ENCODE measurements at regions of chr16 and their contacts with region 1.

Region 1: GRCh38 chr16:88941913-88942909 is 34.8 kb downstream of the CBFA2T3 start:
- DNase-seq: peak in 2 of 3 donors; percentile 32 to 64
- H3K4me3 ChIP-seq: peak overlapping the region in 2 of 3 experiments; percentile 7 to 64
- H3K4me3 Mint-ChIP-seq: peak overlapping the region; percentile 70 to 73
- H3K27ac ChIP-seq: no peak overlapping the region
- H3K27ac Mint-ChIP-seq: no peak overlapping the region
- H3K4me1 ChIP-seq: peaks cover 37 to 47% of the 10 kb centered on the region in 2 donors
- H3K4me1 Mint-ChIP-seq: peaks cover 54% of the 10 kb centered on the region
- H3K27me3 ChIP-seq: peaks cover 0 to 2% of the 10 kb centered on the region in 2 donors
- H3K27me3 Mint-ChIP-seq: peaks cover 2 to 33% (median 10%) of the 10 kb centered on the region in 3 donors
- CTCF ChIP-seq: peak; percentile 97

Region 2: GRCh38 chr16:88785106-88785924 is 156.9 kb before region 1 on chr16 and contains the start of gene PIEZO1:
- intact Hi-C with region 1: loop called in 1 of 2 experiments (anchors 5 kb)
- DNase-seq: peak; percentile 62 to 75 (median 71)
- H3K4me3 ChIP-seq: peak within 1 kb of the TSS; percentile 47 to 80 (median 73)
- H3K4me3 Mint-ChIP-seq: peak within 1 kb of the TSS; percentile 90 to 93
- H3K27ac ChIP-seq: peak within 1 kb of the TSS; percentile 86 to 99
- H3K27ac Mint-ChIP-seq: peak within 1 kb of the TSS in 6 of 7 donors; percentile 87 to 95 (median 90)
- H3K4me1 ChIP-seq: peaks cover 56 to 64% of the 10 kb centered on the region in 2 donors
- H3K4me1 Mint-ChIP-seq: peaks cover 48% of the 10 kb centered on the region
- H3K27me3 ChIP-seq: no peaks in the 10 kb centered on the region
- H3K27me3 Mint-ChIP-seq: peaks cover 0 to 3% (median 0%) of the 10 kb centered on the region in 3 donors
- CTCF ChIP-seq: peak; percentile 97
- polyA plus RNA-seq, gene PIEZO1: 10.2 to 405 (median 15.0) TPM

Region 3: DNA sequence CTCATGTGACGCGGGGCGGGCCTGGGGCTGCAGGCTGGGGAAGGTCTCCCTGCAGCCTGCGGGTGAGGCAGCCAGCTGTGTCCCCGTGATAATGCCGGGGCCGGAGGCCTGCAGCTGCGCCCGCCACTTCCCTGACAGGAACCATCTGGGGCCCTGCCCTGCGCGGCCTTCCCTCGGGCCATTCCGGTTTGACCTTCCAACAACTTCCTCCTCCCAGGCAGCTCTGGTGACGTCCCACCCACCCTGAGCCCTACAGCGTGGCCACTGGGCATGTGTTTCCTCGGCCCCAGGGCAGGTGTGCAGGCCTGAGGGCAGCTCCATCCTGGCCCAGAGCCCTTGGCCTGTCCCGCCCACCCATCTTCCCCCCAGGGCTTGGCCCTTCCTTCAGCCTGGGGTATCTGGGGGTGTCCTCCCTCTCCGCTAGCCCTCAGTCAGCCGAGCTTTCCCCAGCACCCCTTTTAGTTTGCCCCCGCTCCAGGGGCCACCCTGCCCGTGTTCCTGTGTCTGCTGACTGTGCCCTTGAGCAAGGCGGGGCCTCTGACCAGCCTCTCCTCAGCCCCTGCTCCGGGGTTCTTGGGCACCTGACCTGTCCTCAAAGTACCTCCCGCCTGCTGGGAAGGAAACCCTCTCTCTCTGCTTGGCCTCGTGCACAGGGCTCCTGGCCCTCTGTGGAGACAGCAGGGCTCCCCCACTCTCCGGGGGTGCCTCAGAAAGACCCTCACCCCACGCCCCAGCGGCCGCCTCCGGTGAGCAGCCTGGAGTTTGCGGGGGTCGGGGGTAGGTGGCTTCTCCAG is 35.0 kb after region 1 on chr16 and contains the start of gene CBFA2T3:
- intact Hi-C with region 1: loop called (anchors 2 kb)
- DNase-seq: peak; percentile 76 to 86 (median 82)
- H3K4me3 ChIP-seq: peak within 1 kb of the TSS; percentile 63 to 95 (median 73)
- H3K4me3 Mint-ChIP-seq: peak within 1 kb of the TSS; percentile 94 to 99
- H3K27ac ChIP-seq: peak within 1 kb of the TSS; percentile 12 to 84
- H3K27ac Mint-ChIP-seq: peak within 1 kb of the TSS; percentile 41 to 88 (median 72)
- H3K4me1 ChIP-seq: peaks cover 68 to 75% of the 10 kb centered on the region in 2 donors
- H3K4me1 Mint-ChIP-seq: peaks cover 60% of the 10 kb centered on the region
- H3K27me3 ChIP-seq: no peaks in the 10 kb centered on the region
- H3K27me3 Mint-ChIP-seq: peaks cover 3 to 21% (median 5%) of the 10 kb centered on the region in 3 donors
- CTCF ChIP-seq: no peak
- polyA plus RNA-seq, gene CBFA2T3: 5.3 to 32.2 (median 6.2) TPM

Region 4: DNA sequence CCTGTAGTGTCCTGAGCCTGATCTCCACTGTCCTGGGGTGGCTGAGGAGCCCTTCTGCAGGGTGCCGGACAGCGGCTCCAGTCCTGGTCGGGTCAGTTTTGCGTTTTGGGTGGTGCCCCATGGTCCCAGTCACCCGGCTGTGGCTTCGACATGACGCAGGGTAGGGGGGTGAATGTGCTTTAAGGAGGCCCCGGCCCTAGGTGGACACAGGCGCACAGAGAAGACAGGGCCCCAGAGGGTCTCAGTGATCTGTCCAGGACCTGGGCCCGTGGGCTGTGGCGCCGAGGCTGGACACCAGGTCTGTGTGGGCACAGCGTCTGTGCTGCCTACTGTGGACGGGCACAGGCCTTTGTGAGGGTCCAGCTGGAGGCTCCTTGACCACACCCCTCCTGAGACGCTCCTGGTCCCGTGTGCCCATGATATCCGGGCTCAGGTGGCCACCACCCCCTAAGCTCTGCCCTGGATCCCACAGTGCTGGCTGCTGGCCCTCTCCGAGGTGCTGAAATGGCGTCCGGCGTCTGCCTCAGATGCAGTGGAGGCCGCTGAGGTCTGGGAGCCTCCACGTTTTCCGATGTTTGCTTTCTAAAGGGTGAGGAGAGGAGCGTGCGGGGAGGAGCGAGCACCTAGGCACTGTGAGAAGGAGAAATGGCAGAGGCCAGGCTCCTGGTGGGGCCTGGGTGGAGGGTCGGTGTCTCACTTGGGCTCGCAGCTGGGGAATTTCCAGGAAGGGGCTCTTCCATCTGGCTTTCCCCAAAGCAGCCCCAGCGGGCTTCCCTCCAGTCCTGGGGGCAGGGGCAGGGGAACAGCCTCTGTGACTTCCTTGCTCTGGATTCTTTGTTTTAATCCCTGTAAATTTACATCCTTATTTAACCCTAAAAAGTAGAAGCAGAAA is 95.3 kb after region 1 on chr16:
- intact Hi-C with region 1: loop called (anchors 10 kb)
- DNase-seq: peak in 1 of 3 donors; percentile 7
- H3K4me3 ChIP-seq: no peak overlapping the region
- H3K4me3 Mint-ChIP-seq: peak overlapping the region in 1 of 2 donors; percentile 57
- H3K27ac ChIP-seq: no peak overlapping the region
- H3K27ac Mint-ChIP-seq: peak overlapping the region in 1 of 7 donors; percentile 22
- H3K4me1 ChIP-seq: peaks cover 12 to 15% of the 10 kb centered on the region in 2 donors
- H3K4me1 Mint-ChIP-seq: peaks cover 14% of the 10 kb centered on the region
- H3K27me3 ChIP-seq: peaks cover 0 to 4% of the 10 kb centered on the region in 2 donors
- H3K27me3 Mint-ChIP-seq: peaks cover 11 to 20% (median 14%) of the 10 kb centered on the region in 3 donors
- CTCF ChIP-seq: no peak

Region 5: DNA sequence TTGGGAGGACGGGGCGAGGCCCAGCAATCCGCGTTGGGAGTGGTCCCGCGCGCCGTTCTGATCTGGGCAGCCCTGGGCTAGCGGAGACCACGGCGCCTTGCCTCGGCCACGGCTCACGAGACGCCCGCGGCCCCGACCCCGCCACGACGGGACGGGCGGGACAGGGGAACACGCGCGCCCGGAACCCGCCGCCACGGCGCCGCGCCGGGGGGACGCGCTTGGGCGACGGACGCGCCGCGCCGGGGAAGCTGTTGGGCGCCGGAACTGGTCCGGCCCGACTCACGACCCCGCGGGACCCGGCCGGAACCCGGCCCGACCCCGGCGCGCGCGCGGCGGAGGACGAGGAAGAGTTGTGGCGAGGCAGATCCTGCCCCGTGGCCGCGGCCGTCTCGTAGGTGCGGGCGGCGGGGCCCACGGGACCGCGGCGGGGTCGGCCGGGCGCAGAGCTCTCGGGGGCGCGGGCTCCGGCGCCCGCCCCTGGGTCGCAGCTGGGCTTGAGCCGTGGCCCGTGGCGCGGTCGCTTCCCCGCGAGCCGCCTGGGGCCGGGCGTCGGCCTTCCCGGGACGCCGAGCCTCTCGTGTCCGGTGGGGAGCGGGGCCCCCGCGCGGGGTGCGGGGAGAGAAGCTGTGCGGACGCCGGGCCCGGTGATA is 151.5 kb after region 1 on chr16 and contains the start of gene ACSF3:
- intact Hi-C with region 1: loop called (anchors 10 kb)
- DNase-seq: peak; percentile 53 to 59 (median 54)
- H3K4me3 ChIP-seq: peak within 1 kb of the TSS; percentile 51 to 88 (median 75)
- H3K4me3 Mint-ChIP-seq: peak within 1 kb of the TSS; percentile 97 to 99
- H3K27ac ChIP-seq: peak within 1 kb of the TSS in 1 of 2 donors; percentile 73
- H3K27ac Mint-ChIP-seq: peak within 1 kb of the TSS in 4 of 7 donors; percentile 27 to 91 (median 80)
- H3K4me1 ChIP-seq: peaks cover 16 to 46% of the 10 kb centered on the region in 2 donors
- H3K4me1 Mint-ChIP-seq: peaks cover 48% of the 10 kb centered on the region
- H3K27me3 ChIP-seq: peaks cover 0 to 22% of the 10 kb centered on the region in 2 donors
- H3K27me3 Mint-ChIP-seq: peaks cover 10 to 35% (median 29%) of the 10 kb centered on the region in 3 donors
- CTCF ChIP-seq: no peak
- polyA plus RNA-seq, gene ACSF3: 23.5 to 26.7 (median 26.4) TPM

Region 6: DNA sequence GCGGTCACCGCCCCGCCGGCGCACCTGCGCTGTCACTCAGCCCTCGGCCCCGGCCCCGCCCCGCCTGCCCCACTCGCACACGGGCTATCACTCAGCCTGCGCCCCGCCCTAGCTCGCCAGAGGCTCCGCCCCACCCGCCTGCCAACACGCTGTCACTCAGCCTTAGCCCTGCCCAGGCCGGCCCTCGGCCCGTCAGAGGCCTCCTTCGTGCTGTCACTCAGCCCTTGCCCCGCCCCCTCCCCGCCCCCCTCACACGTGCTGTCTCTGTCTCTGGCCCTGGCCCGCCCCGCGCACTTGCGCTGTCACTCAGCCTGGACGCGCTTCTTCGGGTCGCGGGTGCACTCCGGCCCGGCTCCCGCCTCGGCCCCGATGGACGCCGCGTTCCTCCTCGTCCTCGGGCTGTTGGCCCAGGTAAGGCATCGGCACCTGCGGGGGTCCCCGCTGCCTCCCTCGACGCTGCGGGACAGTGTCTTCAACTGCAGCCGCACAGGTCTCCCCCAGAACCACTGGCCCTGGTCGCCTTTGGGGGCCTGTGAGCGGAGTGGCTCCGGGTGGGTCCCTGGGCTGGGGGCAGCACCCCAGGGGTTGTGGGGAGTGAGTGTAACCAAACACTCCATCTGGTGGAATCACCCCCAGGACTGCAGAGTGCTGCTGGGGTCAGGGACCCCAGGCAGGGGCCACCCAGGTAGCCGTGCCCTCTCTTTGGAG is 229.4 kb after region 1 on chr16 and contains the start of gene CDH15:
- intact Hi-C with region 1: loop called (anchors 2 kb)
- DNase-seq: peak; percentile 88 to 95 (median 95)
- H3K4me3 ChIP-seq: peak within 1 kb of the TSS in 1 of 3 experiments; percentile 44
- H3K4me3 Mint-ChIP-seq: peak within 1 kb of the TSS; percentile 51 to 86
- H3K27ac ChIP-seq: no peak within 1 kb of the TSS
- H3K27ac Mint-ChIP-seq: peak within 1 kb of the TSS in 3 of 7 donors; percentile 33 to 75 (median 51)
- H3K4me1 ChIP-seq: peaks cover 18 to 24% of the 10 kb centered on the region in 2 donors
- H3K4me1 Mint-ChIP-seq: peaks cover 6% of the 10 kb centered on the region
- H3K27me3 ChIP-seq: peaks cover 0 to 40% of the 10 kb centered on the region in 2 donors
- H3K27me3 Mint-ChIP-seq: peaks cover 8 to 61% (median 17%) of the 10 kb centered on the region in 3 donors
- CTCF ChIP-seq: no peak
- polyA plus RNA-seq, gene CDH15: not detected

Region 7: DNA sequence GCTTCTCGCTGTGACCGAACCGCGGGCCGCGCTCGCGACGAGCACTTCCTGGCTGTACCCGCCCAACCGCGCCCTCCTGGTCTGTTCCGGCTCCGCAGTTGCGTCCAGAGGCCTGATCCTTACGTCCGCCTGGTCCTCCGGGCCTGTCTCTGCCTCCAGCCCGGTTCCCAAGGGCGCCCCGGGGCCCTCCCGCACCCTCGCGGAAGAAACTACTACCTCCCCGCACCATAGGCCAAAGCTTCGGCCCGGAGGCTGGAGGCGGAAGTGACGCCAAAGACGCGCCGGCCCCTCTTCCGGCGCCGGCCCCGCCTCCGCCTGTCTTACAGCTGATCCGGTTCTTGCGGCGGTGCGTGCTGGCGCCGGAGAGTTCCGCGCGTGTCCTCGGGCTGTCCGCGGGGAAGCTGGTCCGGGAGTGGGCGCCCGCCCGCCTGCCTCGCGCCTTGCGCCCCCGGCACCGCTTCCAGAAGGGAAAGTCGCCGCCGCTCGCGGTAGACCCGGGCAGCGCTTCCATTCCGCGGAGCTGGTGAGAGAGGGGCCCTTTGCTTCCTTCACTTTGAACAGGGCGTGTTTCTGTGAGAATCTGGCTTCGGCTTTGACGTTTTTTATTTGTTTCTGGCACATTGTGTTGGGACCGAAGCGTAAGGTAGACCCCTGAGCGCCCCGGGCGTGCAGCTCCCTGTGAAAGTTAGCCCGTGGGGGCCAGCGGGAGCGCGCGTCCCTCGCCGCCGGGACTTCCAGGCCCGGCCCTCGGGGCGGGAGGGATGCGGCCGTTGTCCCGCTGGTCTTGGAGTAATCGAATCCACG is 275.4 kb after region 1 on chr16 and contains the start of gene ZNF778:
- intact Hi-C with region 1: loop called (anchors 2 to 5 kb)
- DNase-seq: peak; percentile 84 to 87 (median 87)
- H3K4me3 ChIP-seq: peak within 1 kb of the TSS; percentile 56 to 93 (median 61)
- H3K4me3 Mint-ChIP-seq: peak within 1 kb of the TSS; percentile 88 to 91
- H3K27ac ChIP-seq: peak within 1 kb of the TSS; percentile 68 to 94
- H3K27ac Mint-ChIP-seq: peak within 1 kb of the TSS; percentile 90 to 97 (median 93)
- H3K4me1 ChIP-seq: peaks cover 16 to 19% of the 10 kb centered on the region in 2 donors
- H3K4me1 Mint-ChIP-seq: peaks cover 17% of the 10 kb centered on the region
- H3K27me3 ChIP-seq: no peaks in the 10 kb centered on the region
- H3K27me3 Mint-ChIP-seq: peaks cover 0 to 1% (median 0%) of the 10 kb centered on the region in 3 donors
- CTCF ChIP-seq: no peak
- polyA plus RNA-seq, gene ZNF778: 0.51 to 9.0 (median 0.60) TPM

Measured in CD14-positive monocyte (primary cell).